Lower lobe of right lung (tissue), 2 donors: ENCODE measurements at regions of chr20 and their contacts with region 1.

Region 1: DNA sequence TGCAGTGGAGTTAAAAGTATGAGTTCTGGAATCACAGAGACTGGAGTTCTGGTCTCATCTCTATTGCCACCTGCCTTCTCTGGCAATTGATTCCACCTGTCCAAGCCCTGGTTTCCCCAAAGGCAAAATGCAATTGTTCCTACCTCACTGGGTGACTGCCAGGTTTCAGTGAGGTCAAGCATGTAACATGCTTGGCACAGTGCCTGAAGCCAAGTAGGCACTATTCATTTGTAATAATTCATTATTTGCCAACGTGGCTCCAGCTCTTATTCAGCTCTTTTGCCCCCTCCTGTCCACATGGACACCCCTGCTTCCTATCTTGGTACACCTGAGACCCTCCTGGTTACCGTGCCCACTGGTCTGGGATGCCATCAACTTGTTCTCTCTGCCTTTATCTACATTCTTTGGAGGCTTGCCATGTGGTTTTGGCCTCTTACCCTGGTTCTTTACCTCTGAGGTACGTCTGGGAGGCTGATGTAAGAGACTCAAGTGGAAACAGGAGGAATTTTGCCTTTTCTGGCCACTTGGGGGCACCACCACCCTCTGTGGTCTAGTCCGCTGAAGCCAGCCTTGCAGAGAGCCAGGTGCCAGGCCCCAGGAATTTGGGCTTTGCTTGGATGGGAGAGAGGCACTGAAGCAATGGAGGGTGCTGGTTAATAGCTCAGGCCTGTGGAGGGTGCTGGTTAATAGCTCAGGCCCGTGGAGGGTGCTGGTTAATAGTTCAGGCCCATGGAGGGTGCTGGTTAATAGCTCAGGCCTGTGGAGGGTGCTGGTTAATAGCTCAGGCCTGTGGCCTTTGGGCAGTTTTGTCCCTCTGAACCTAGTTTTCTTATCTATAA is 1.7 kb downstream of the KCNK15 start:
- DNase-seq: peak; percentile 84
- ATAC-seq: peak; percentile 86 to 88
- H3K4me3 ChIP-seq: peak overlapping the region; percentile 55
- H3K27ac ChIP-seq: peak overlapping the region; percentile 42
- H3K4me1 ChIP-seq: peaks cover 35% of the 10 kb centered on the region
- H3K27me3 ChIP-seq: peaks cover 39% of the 10 kb centered on the region
- CTCF ChIP-seq: peak; percentile 69

Region 2: DNA sequence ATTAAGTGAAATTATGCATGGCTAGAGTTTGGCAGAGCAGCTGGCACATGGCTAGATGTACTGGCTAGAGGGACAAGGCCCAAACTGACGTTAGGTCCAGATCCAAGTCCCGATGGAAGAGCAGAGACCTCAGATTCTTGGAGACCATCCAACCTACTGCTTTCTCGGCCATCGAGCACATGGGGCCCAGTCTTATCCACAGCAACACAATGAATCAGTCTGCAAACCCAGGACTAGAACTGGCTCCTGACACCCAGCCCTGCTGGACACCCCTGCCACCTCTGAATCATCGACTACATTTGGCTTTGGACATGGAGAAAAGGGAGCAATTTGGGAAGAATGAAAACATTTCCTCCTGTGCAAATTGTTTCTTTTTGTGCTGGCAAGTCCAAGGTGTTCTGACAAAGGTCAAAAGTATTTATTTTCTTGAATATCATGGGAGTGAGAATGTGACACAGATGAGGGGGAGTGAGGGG is 114.2 kb after region 1 on chr20:
- intact Hi-C with region 1: loop called (anchors 10 kb)
- DNase-seq: no peak
- ATAC-seq: peak in 1 of 2 donors; percentile 26
- H3K4me3 ChIP-seq: no peak overlapping the region
- H3K27ac ChIP-seq: no peak overlapping the region
- H3K4me1 ChIP-seq: peaks cover 2% of the 10 kb centered on the region
- H3K27me3 ChIP-seq: no peaks in the 10 kb centered on the region
- CTCF ChIP-seq: no peak